CD8-positive, alpha-beta memory T cell (primary cell): ENCODE measurements at regions of chr5 and their contacts with region 1.

Region 1: GRCh38 chr5:71601222-71602041 is 14.3 kb downstream of the MCCC2 start:
- DNase-seq: peak; percentile 48 to 88 (median 57)
- H3K4me3 ChIP-seq: no peak overlapping the region
- H3K4me3 Mint-ChIP-seq: peak overlapping the region in 6 of 7 donors; percentile 33 to 80 (median 56)
- H3K27ac ChIP-seq: no peak overlapping the region
- H3K27ac Mint-ChIP-seq: peak overlapping the region; percentile 83 to 94 (median 88)
- H3K4me1 ChIP-seq: peaks cover 16% of the 10 kb centered on the region
- H3K4me1 Mint-ChIP-seq: peaks cover 26 to 35% (median 30%) of the 10 kb centered on the region in 3 donors
- H3K27me3 ChIP-seq: no peaks in the 10 kb centered on the region
- H3K27me3 Mint-ChIP-seq: no peaks in the 10 kb centered on the region

Region 2: DNA sequence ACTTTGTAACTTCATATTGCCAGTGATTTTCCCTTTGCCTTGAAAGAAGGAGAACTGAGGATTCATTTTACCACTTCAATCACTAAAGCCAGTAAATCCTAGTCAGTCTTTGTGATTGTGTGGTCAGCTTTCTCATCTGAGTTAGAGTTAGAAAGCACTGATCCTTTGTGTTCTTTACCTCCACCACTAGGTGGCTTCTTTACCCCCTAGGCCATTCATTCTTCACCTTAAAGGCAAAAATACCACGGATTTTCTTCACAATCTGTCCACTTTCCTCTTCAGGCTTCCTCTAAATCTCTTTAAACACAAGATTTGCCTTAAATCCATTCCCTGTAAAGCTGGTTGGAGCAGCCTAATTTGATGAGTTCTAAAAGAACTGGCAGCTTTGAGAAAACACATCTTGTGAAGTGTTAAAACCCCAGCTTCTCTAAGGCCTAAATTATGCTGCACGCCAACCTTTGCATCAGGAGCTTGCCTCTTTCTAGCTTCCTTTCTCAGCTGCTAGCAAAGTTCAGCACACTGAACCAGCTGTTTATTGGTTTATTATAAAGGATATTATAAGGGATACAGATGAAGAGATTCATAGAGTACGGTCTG is 125.5 kb before region 1 on chr5:
- CTCF ChIA-PET with region 1: interaction called, 10 read pairs
- POLR2A ChIA-PET with region 1: no interaction called
- DNase-seq: peak in 1 of 5 donors; percentile 16
- H3K4me3 ChIP-seq: no peak overlapping the region
- H3K4me3 Mint-ChIP-seq: no peak overlapping the region
- H3K27ac ChIP-seq: no peak overlapping the region
- H3K27ac Mint-ChIP-seq: peak overlapping the region in 3 of 8 donors; percentile 4 to 76 (median 18)
- H3K4me1 ChIP-seq: no peaks in the 10 kb centered on the region
- H3K4me1 Mint-ChIP-seq: peaks cover 0 to 8% (median 5%) of the 10 kb centered on the region in 3 donors
- H3K27me3 ChIP-seq: no peaks in the 10 kb centered on the region
- H3K27me3 Mint-ChIP-seq: no peaks in the 10 kb centered on the region

Region 3: DNA sequence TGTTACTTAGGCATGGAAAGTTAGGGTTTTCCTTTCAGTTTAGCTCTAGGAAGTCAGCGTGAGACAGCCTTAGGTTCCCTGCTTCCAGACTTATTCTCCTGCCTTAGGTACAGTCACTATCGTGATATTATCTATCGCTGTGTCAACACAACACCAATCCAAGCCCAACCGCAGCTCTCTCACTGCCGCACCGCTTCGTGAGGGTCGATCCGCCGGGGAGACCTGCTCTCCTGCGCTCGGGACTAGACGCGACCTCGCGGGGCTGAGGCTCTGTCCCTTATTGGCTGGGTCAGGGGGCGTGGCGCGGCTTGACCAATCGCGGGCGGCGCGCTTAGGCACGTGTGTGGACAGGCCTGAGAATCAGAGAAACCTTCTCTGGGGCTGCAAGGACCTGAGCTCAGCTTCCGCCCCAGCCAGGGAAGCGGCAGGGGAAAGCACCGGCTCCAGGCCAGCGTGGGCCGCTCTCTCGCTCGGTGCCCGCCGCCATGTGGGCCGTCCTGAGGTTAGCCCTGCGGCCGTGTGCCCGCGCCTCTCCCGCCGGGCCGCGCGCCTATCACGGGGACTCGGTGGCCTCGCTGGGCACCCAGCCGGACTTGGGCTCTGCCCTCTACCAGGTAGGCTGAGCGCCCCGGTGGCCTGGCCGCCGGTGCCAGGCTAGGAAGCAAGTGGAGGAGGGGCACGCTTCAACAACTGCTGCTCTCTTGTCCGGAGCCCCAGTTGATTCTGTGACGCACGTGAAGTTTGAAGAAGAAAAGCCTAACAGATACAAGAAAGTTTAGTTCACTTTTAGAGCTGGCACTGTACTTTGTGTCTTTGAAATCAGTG is 14.3 kb before region 1 on chr5 and contains the start of gene MCCC2:
- CTCF ChIA-PET with region 1: interaction called, 23 read pairs
- POLR2A ChIA-PET with region 1: interaction called, 11 read pairs
- DNase-seq: peak; percentile 93 to 97 (median 95)
- H3K4me3 ChIP-seq: peak within 1 kb of the TSS; percentile 75
- H3K4me3 Mint-ChIP-seq: peak within 1 kb of the TSS; percentile 90 to 99 (median 94)
- H3K27ac ChIP-seq: peak within 1 kb of the TSS; percentile 81
- H3K27ac Mint-ChIP-seq: peak within 1 kb of the TSS; percentile 84 to 100 (median 99)
- H3K4me1 ChIP-seq: peaks cover 32% of the 10 kb centered on the region
- H3K4me1 Mint-ChIP-seq: peaks cover 40 to 47% (median 43%) of the 10 kb centered on the region in 3 donors
- H3K27me3 ChIP-seq: no peaks in the 10 kb centered on the region
- H3K27me3 Mint-ChIP-seq: no peaks in the 10 kb centered on the region
- total RNA-seq, gene MCCC2: 62.8 to 63.8 TPM

Region 4: DNA sequence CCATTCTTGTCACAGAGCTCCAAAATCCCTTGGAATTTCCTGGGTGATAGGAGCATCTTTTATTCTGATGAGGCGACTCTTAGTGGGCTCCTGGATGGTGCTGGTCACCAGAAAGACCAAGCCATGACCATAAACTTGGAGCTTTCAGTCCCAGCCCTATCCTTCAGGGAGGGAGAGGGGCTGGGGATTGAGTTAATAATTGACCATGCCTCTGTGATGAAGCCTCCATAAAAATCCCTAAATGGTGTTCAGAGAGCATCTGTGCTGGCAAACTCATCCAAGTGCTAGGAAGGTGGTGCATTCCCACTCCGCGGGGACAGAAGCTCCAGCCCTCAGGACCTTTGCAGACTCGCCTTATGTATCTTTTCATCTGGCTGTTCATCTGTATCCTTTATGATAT is 14.4 kb after region 1 on chr5:
- CTCF ChIA-PET with region 1: no interaction called
- POLR2A ChIA-PET with region 1: no interaction called
- DNase-seq: no peak
- H3K4me3 ChIP-seq: no peak overlapping the region
- H3K4me3 Mint-ChIP-seq: no peak overlapping the region
- H3K27ac ChIP-seq: no peak overlapping the region
- H3K27ac Mint-ChIP-seq: no peak overlapping the region
- H3K4me1 ChIP-seq: no peaks in the 10 kb centered on the region
- H3K4me1 Mint-ChIP-seq: peaks cover 22 to 34% (median 32%) of the 10 kb centered on the region in 3 donors
- H3K27me3 ChIP-seq: no peaks in the 10 kb centered on the region
- H3K27me3 Mint-ChIP-seq: no peaks in the 10 kb centered on the region

Region 5: DNA sequence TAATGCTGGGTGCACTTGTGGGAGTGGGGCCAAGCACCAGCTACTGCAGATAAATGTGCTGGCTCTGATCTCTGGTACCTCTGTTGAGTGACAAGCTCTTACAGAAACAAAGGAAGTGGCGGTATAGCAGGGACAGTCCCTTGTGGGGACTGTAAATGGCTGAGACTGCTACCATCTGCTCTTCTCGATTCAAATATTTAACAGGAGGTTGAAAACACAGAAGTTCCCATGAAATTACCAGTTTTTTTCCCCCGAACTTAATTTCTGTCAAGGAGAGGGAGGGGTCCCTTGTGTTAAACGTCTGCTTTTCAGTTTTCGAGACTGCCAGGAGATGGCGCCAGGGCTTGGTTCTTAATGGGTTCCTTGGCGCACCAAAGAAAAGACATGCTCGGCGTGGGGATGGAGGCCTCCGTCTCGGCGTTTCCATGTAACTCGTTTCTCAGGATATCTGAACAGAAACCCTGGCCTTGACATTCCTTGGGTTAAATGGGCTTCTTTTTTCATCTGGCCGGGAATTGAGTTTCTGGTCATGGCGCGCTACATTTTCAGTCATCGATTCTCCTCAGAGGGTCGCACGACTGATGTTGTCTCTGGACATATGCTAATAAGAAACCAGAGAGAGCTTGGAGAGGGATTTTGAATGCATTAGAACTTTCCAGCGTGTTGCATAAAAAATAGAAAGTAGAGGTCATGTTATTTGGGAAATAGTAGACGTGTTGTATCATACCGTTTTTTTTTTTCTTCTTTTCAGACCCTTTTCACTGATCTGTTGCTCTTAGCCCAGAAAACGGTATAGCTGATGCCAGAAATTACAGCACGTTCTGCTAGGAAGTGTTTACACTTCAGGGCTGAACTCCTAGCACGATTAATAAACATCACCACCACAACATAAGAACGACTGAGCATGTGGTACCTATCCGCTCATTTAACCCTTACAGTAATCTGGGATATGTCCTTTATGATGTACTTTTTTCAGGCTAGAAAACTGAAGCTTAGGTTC is 181.6 kb after region 1 on chr5:
- CTCF ChIA-PET with region 1: no interaction called
- POLR2A ChIA-PET with region 1: no interaction called
- DNase-seq: peak in 1 of 5 donors; percentile 11
- H3K4me3 ChIP-seq: peak overlapping the region; percentile 4
- H3K4me3 Mint-ChIP-seq: peak overlapping the region in 4 of 7 donors; percentile 23 to 57 (median 41)
- H3K27ac ChIP-seq: no peak overlapping the region
- H3K27ac Mint-ChIP-seq: peak overlapping the region in 1 of 8 donors; percentile 25
- H3K4me1 ChIP-seq: peaks cover 11% of the 10 kb centered on the region
- H3K4me1 Mint-ChIP-seq: peaks cover 14% of the 10 kb centered on the region in 3 donors
- H3K27me3 ChIP-seq: no peaks in the 10 kb centered on the region
- H3K27me3 Mint-ChIP-seq: peaks cover 6 to 23% of the 10 kb centered on the region in 2 donors